Pancreas (tissue), 10 donors: ENCODE measurements at regions of chr4 and their contacts with region 1.

Region 1: GRCh38 chr4:108030332-108030731 is 40.6 kb downstream of the HADH start:
- DNase-seq: peak in 1 of 6 donors; percentile 14
- ATAC-seq: peak in 3 of 4 donors; percentile 69 to 80 (median 79)
- H3K4me3 ChIP-seq: no peak overlapping the region
- H3K27ac ChIP-seq: no peak overlapping the region
- H3K4me1 ChIP-seq: no peaks in the 10 kb centered on the region
- H3K27me3 ChIP-seq: no peaks in the 10 kb centered on the region
- CTCF ChIP-seq: no peak

Region 2: GRCh38 chr4:108570993-108571569 is 540.7 kb after region 1 on chr4:
- intact Hi-C with region 1: loop called in 2 of 3 experiments (anchors 10 kb)
- DNase-seq: no peak
- ATAC-seq: no peak
- H3K4me3 ChIP-seq: no peak overlapping the region
- H3K27ac ChIP-seq: no peak overlapping the region
- H3K4me1 ChIP-seq: no peaks in the 10 kb centered on the region
- H3K27me3 ChIP-seq: no peaks in the 10 kb centered on the region
- CTCF ChIP-seq: no peak